Right cardiac atrium (tissue), 5 donors: ENCODE measurements at regions of chr12 and their contacts with region 1.

Region 1: DNA sequence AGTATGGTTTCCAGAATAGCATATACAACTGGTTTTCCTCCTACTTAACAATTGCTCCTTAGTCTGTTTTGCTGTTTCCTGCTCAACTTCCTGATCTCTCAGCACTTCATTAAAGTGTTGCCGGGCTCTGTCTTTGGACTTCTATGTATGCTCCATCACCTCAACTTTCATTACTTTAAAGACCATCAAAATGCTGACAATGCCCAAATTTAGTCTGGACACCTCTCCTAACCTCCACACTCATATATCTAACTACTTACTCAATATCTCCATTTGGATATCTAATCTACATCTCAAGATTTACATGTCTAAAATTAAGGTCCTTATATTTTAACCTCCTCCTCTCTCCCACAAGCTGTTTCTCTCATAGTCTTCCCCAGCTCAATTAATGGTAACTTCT is 54.4 kb upstream of the LGR5 start:
- DNase-seq: no peak
- ATAC-seq: no peak
- H3K4me3 ChIP-seq: no peak overlapping the region
- H3K27ac ChIP-seq: no peak overlapping the region
- H3K4me1 ChIP-seq: no peaks in the 10 kb centered on the region
- H3K27me3 ChIP-seq: no peaks in the 10 kb centered on the region

Region 2: GRCh38 chr12:71216725-71217579 is 168.2 kb before region 1 on chr12:
- intact Hi-C with region 1: loop called in 1 of 4 experiments (anchors 10 kb)
- DNase-seq: no peak
- ATAC-seq: peak in 1 of 2 donors; percentile 22
- H3K4me3 ChIP-seq: no peak overlapping the region
- H3K27ac ChIP-seq: no peak overlapping the region
- H3K4me1 ChIP-seq: no peaks in the 10 kb centered on the region
- H3K27me3 ChIP-seq: no peaks in the 10 kb centered on the region